ENCODE measurements at regions of chr11 and their contacts with region 1.

Region 1: DNA sequence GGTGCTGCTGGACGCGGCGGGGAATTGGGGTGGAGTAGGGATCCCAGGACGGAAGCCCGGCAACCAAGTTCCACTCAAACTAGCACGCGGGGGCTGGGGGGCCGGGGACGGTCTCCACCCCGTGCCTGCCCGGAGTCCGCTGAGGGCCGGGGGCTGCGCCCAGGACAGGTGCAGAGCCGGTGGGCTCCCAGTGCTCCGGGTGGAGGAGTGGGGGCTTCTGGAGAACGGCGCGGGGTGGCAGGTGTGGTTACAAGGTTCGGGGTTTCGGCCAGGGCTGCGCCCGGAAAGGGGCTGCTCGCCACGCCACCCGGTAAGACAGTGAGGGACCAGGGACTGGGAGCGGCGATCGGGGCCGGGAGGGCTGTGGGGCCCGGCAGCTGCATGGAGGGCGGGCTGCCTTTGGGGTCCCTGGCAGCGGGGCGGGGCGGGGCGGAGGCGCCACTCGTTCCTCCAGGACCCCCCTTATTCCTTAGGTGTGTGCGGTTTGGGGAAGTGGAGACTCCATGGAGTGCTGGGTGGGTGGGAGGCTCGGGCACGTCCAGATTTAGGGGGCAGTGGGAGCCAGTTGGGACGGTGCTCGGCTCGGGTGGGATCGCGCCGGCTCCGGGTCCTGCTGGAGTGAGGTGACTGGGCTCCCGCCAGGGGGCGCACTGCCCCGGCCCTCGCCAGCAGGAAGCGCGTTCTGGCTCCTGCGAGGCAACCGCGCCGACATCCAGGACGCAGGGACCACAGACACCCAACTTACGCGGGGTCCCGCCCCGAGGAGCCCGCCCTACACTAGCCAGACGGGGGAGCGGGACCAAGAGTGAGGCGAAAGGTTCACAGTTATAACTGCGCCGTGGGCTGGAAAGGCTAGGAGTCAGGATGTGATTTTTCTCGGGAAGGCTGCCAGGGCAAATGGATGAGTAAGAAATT is 868 bp downstream of the TSPAN18 start:
- DNase-seq: peak; percentile 88 to 92 (median 89)
- ATAC-seq: peak; percentile 82 to 86 (median 84)
- H3K4me3 ChIP-seq: peak overlapping the region; percentile 76 to 98 (median 86)
- H3K27ac ChIP-seq: peak overlapping the region; percentile 74 to 96 (median 88)
- H3K4me1 ChIP-seq: peaks cover 0 to 70% (median 48%) of the 10 kb centered on the region in 12 donors
- H3K27me3 ChIP-seq: peaks cover 0 to 26% (median 0%) of the 10 kb centered on the region in 9 donors
- CTCF ChIP-seq: peak; percentile 93 to 98 (median 96)
- POLR2A ChIP-seq: no peak

Region 2: DNA sequence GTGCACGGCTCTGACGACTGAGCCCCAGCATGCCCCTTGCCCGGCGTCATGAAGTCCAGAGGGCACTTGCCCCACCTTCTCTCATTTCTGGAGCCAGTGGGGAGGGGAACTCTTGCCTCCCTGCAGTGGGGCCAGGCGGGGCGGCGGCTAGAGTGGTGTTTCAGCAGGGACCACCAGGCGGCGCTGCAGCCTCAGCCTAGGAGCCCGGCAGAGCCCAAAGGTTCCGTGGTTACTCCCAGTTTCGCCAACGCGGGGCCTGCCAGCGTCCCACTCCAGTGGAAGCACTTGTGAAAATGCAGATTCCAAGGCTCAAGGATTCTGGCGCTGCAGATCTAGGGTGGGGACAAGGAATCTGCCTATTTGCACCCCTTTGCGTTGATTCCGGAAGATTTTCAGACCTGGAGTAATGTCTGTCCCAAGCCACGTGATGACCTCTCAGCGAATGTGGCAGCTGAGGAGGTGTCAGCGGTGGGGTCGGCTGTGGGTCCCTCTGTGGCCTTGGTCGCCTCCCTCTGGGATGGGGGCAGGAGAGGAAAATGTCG is 106.4 kb before region 1 on chr11:
- intact Hi-C with region 1: loop called in 5 of 10 experiments (anchors 2 to 5 kb)
- DNase-seq: peak; percentile 74 to 91 (median 77)
- ATAC-seq: peak; percentile 65 to 79 (median 66)
- H3K4me3 ChIP-seq: peak overlapping the region in 8 of 12 donors; percentile 19 to 48 (median 34)
- H3K27ac ChIP-seq: no peak overlapping the region
- H3K4me1 ChIP-seq: peaks cover 3 to 48% (median 28%) of the 10 kb centered on the region in 12 donors
- H3K27me3 ChIP-seq: no peaks in the 10 kb centered on the region
- CTCF ChIP-seq: peak in 11 of 12 donors; percentile 94 to 99 (median 96)
- POLR2A ChIP-seq: no peak

Region 3: GRCh38 chr11:44634401-44635281 is 93.0 kb before region 1 on chr11:
- intact Hi-C with region 1: loop called in 8 of 10 experiments (anchors 2 to 10 kb)
- DNase-seq: peak; percentile 79 to 92 (median 82)
- ATAC-seq: peak; percentile 72 to 88 (median 80)
- H3K4me3 ChIP-seq: peak overlapping the region in 2 of 12 donors; percentile 2 to 24
- H3K27ac ChIP-seq: peak overlapping the region in 2 of 12 donors; percentile 10 to 15
- H3K4me1 ChIP-seq: peaks cover 7 to 40% (median 29%) of the 10 kb centered on the region in 12 donors
- H3K27me3 ChIP-seq: no peaks in the 10 kb centered on the region
- CTCF ChIP-seq: peak in 1 of 12 donors; percentile 14
- POLR2A ChIP-seq: no peak

Region 4: GRCh38 chr11:44760917-44761550 is 33.4 kb after region 1 on chr11:
- intact Hi-C with region 1: loop called in 1 of 10 experiments (anchors 5 kb)
- DNase-seq: peak in 4 of 5 donors; percentile 63 to 83 (median 69)
- ATAC-seq: peak; percentile 88 to 94 (median 90)
- H3K4me3 ChIP-seq: no peak overlapping the region
- H3K27ac ChIP-seq: peak overlapping the region; percentile 70 to 92 (median 90)
- H3K4me1 ChIP-seq: peaks cover 18 to 81% (median 60%) of the 10 kb centered on the region in 12 donors
- H3K27me3 ChIP-seq: no peaks in the 10 kb centered on the region
- CTCF ChIP-seq: peak in 6 of 12 donors; percentile 5 to 24 (median 16)
- POLR2A ChIP-seq: no peak

Region 5: DNA sequence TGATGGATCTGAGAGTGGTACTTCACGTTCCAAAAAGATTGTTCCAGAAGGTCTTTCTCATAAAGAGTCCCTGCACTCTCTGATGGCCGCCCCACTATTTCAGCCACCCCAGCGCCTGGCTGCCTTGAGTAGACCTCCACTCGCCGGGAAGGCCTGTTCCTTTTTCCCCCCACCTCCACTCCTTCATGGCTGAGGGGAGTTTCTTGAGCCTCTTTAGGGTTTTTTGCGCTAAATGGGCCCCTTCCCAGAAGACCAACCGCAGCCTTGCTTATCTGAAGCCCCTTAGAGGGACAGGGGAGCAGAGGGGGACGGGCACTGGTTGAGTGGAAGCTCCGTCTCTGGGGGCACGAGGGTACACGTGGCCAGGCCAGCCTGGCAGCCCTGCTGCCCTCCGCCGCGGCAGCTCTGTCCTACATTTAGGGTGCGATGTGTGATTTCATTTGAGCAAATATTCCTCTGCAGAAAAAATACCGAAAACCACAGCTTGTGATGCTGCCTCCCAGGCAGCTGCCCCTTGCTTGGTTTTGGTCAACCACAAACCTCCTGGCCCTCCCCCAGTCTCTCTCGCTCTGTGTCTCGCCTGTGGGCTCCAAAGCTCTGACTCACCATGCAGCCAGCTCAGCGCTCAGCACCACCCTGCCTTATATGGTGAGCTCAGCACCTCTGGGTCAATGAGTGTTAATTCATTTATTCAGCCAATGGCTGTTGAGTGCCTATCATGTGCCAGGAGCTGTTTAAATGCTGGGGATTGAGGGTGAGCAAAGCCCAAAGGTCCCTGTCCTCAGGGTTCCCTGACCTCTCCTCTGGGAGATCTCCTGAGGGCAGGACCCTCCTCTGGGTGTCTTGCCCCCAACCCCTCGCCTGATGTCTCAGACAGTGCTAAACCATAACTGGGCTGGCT is 134.5 kb after region 1 on chr11:
- intact Hi-C with region 1: loop called in 2 of 10 experiments (anchors 5 to 10 kb)
- DNase-seq: peak; percentile 74 to 91 (median 81)
- ATAC-seq: peak; percentile 88 to 94 (median 90)
- H3K4me3 ChIP-seq: no peak overlapping the region
- H3K27ac ChIP-seq: peak overlapping the region; percentile 49 to 95 (median 84)
- H3K4me1 ChIP-seq: peaks cover 0 to 58% (median 28%) of the 10 kb centered on the region in 12 donors
- H3K27me3 ChIP-seq: no peaks in the 10 kb centered on the region
- CTCF ChIP-seq: no peak
- POLR2A ChIP-seq: no peak

Region 6: DNA sequence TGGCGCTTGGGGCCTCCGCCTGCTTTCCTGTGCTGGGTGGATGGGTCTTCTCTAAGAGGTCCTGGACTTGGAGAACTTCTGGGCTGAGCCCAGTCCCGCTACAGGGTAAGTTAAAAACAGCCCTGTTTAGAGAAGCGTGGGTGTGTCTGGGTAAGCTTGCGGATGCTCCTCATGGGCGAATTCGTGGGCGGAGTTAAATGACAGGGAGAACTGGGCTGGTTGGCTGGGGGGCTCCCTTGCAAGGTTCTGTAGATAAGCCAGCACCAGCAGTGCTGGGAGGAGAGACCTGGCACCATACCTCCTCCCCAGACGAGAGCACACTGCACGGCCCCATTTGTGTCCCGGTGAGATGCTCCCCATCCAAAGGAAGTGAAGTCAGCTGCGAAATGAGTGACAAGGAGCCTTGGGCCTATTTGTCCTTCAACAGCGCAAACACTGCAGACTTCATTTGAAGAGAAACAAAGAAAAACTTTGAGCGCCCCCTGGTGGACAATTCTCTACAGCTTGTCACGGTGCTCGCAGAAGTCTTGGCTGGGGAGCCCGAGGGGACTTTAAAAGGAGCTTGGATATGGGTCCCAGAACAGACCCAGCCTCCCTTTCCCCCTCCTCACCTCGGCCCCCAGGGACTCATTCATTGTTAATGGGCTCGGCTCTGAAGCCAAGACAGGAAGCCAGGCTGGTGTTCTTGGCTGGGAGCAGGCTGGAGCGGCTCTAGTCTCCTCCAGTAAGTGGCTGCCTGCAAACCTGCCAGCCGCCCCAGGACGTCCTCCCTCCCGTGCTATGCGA is 183.6 kb after region 1 on chr11:
- intact Hi-C with region 1: loop called in 7 of 10 experiments (anchors 1 to 5 kb)
- DNase-seq: peak; percentile 81 to 91 (median 89)
- ATAC-seq: peak; percentile 67 to 82 (median 71)
- H3K4me3 ChIP-seq: peak overlapping the region in 3 of 12 donors; percentile 8 to 29 (median 8)
- H3K27ac ChIP-seq: peak overlapping the region in 7 of 12 donors; percentile 6 to 58 (median 31)
- H3K4me1 ChIP-seq: peaks cover 0 to 47% (median 26%) of the 10 kb centered on the region in 12 donors
- H3K27me3 ChIP-seq: no peaks in the 10 kb centered on the region
- CTCF ChIP-seq: peak; percentile 84 to 96 (median 90)
- POLR2A ChIP-seq: no peak